ENCODE measurements at regions of chr19 and their contacts with region 1.

Region 1: DNA sequence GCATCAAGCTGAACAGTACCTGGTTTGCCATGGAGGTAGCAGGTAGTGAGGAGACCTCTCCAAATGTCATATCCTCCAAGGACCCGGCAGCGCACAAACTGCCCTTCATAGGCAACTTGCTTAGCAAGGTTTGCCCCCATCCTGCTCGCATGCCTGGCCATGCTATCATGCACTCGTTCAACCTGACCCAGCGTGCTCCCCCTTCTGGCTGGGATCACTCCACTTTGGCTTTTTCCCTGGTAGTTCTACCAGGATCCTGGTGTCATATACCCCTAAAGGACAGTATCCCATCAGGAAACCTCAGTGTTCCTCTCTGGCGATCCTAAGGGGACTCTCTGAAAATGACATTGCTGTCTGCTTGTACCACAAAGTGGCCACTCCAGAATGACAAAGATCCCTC is 38.6 kb upstream of the ZNF30 start:
- DNase-seq: no peak
- H3K4me3 ChIP-seq: no peak overlapping the region
- H3K27ac ChIP-seq: no peak overlapping the region
- H3K4me1 ChIP-seq: no peaks in the 10 kb centered on the region
- H3K27me3 ChIP-seq: no peaks in the 10 kb centered on the region
- CTCF ChIP-seq: no peak
- POLR2A ChIP-seq: no peak

Region 2: GRCh38 chr19:33580645-33581073 is 1307.4 kb before region 1 on chr19:
- intact Hi-C with region 1: no loop called
- DNase-seq: no peak
- H3K4me3 ChIP-seq: no peak overlapping the region
- H3K27ac ChIP-seq: peak overlapping the region in 1 of 2 donors; percentile 0
- H3K4me1 ChIP-seq: no peaks in the 10 kb centered on the region
- H3K27me3 ChIP-seq: no peaks in the 10 kb centered on the region
- CTCF ChIP-seq: no peak
- POLR2A ChIP-seq: no peak

Region 3: GRCh38 chr19:34838753-34839431 is 49.2 kb before region 1 on chr19:
- intact Hi-C with region 1: loop called (anchors 2 kb)
- DNase-seq: no peak
- H3K4me3 ChIP-seq: peak overlapping the region in 1 of 3 donors; percentile 53
- H3K27ac ChIP-seq: no peak overlapping the region
- H3K4me1 ChIP-seq: no peaks in the 10 kb centered on the region
- H3K27me3 ChIP-seq: peaks cover 0 to 3% of the 10 kb centered on the region in 2 donors
- CTCF ChIP-seq: no peak
- POLR2A ChIP-seq: no peak

Region 4: GRCh38 chr19:34938886-34939285 is 50.8 kb after region 1 on chr19:
- intact Hi-C with region 1: no loop called
- DNase-seq: no peak
- H3K4me3 ChIP-seq: no peak overlapping the region
- H3K27ac ChIP-seq: no peak overlapping the region
- H3K4me1 ChIP-seq: no peaks in the 10 kb centered on the region
- H3K27me3 ChIP-seq: no peaks in the 10 kb centered on the region
- CTCF ChIP-seq: no peak
- POLR2A ChIP-seq: no peak